Transverse colon (tissue), 4 donors: ENCODE measurements at regions of chr1 and their contacts with region 1.

Region 1: DNA sequence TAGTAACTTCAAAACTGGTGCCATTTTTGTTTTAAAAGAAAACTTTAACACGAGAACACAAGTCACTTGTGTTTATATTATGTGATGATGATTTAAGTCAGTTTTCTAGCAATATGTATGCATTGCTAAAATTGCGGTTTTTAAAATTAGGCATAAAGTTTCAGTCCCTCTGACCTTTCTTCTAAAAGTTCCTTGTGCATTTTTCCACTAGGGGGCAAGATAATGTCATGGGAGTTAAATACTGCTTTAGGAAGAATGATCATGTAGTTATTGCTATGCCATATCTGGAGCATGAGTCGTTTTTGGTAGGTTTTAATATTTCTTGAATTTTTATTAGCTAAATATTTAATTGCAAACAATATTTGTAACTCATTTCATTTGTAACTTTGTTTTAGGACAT is 10.7 kb downstream of the CDC7 start:
- DNase-seq: no peak
- H3K4me3 ChIP-seq: no peak overlapping the region
- H3K27ac ChIP-seq: no peak overlapping the region
- H3K4me1 ChIP-seq: peaks cover 0 to 7% (median 0%) of the 10 kb centered on the region in 4 donors
- H3K27me3 ChIP-seq: no peaks in the 10 kb centered on the region
- CTCF ChIP-seq: peak; percentile 57 to 71 (median 64)
- EP300 ChIP-seq: no peak
- POLR2A ChIP-seq: no peak

Region 2: GRCh38 chr1:91244737-91245136 is 266.6 kb before region 1 on chr1:
- in situ Hi-C with region 1: no loop called
- intact Hi-C with region 1: no loop called
- DNase-seq: no peak
- H3K4me3 ChIP-seq: no peak overlapping the region
- H3K27ac ChIP-seq: no peak overlapping the region
- H3K4me1 ChIP-seq: no peaks in the 10 kb centered on the region
- H3K27me3 ChIP-seq: no peaks in the 10 kb centered on the region
- CTCF ChIP-seq: no peak
- EP300 ChIP-seq: no peak
- POLR2A ChIP-seq: no peak

Region 3: GRCh38 chr1:91712981-91713841 is 201.8 kb after region 1 on chr1:
- in situ Hi-C with region 1: no loop called
- intact Hi-C with region 1: loop called (anchors 10 kb)
- DNase-seq: peak; percentile 37
- H3K4me3 ChIP-seq: no peak overlapping the region
- H3K27ac ChIP-seq: peak overlapping the region; percentile 73 to 83 (median 76)
- H3K4me1 ChIP-seq: peaks cover 0 to 20% (median 2%) of the 10 kb centered on the region in 4 donors
- H3K27me3 ChIP-seq: no peaks in the 10 kb centered on the region
- CTCF ChIP-seq: no peak
- EP300 ChIP-seq: no peak
- POLR2A ChIP-seq: no peak

Region 4: DNA sequence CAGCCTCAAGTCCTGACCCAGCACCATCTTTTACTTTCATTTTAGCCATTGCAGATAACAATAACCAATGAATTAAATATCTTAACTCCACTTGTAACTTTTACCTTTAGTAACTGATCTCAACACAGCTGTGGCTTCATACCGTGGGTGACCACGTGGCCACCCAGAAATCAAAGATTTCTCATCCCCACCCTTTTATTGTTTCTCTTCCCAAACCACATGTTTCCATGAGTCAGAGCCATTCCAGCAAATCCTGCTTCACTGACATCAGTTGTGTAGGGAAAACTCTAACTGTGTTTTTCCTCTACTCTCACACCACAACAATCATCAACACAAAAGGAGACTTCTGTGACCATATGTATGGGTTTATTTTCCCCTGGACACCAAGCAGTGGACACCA is 412.8 kb after region 1 on chr1:
- in situ Hi-C with region 1: loop called (anchors 5 to 10 kb)
- intact Hi-C with region 1: loop called (anchors 5 kb)
- DNase-seq: no peak
- H3K4me3 ChIP-seq: no peak overlapping the region
- H3K27ac ChIP-seq: no peak overlapping the region
- H3K4me1 ChIP-seq: no peaks in the 10 kb centered on the region
- H3K27me3 ChIP-seq: no peaks in the 10 kb centered on the region
- CTCF ChIP-seq: no peak
- EP300 ChIP-seq: no peak
- POLR2A ChIP-seq: no peak

Region 5: GRCh38 chr1:91929250-91929649 is 417.9 kb after region 1 on chr1:
- in situ Hi-C with region 1: loop called (anchors 5 to 10 kb)
- intact Hi-C with region 1: loop called (anchors 5 kb)
- DNase-seq: no peak
- H3K4me3 ChIP-seq: no peak overlapping the region
- H3K27ac ChIP-seq: no peak overlapping the region
- H3K4me1 ChIP-seq: no peaks in the 10 kb centered on the region
- H3K27me3 ChIP-seq: no peaks in the 10 kb centered on the region
- CTCF ChIP-seq: no peak
- EP300 ChIP-seq: no peak
- POLR2A ChIP-seq: no peak